A549 (cell line): ENCODE measurements at regions of chr17 and their contacts with region 1.

Region 1: GRCh38 chr17:20206068-20206467 is 196.9 kb downstream of the SPECC1 start:
- DNase-seq: peak; percentile 44 to 74
- ATAC-seq: peak; percentile 83 to 87
- H3K4me3 ChIP-seq: no peak overlapping the region
- H3K27ac ChIP-seq: peak overlapping the region; percentile 88 to 92
- H3K4me1 ChIP-seq: peaks cover 75% of the 10 kb centered on the region
- CTCF ChIP-seq: no peak
- EP300 ChIP-seq: no peak
- POLR2A ChIP-seq: no peak
- RAD21 ChIP-seq: no peak

Region 2: DNA sequence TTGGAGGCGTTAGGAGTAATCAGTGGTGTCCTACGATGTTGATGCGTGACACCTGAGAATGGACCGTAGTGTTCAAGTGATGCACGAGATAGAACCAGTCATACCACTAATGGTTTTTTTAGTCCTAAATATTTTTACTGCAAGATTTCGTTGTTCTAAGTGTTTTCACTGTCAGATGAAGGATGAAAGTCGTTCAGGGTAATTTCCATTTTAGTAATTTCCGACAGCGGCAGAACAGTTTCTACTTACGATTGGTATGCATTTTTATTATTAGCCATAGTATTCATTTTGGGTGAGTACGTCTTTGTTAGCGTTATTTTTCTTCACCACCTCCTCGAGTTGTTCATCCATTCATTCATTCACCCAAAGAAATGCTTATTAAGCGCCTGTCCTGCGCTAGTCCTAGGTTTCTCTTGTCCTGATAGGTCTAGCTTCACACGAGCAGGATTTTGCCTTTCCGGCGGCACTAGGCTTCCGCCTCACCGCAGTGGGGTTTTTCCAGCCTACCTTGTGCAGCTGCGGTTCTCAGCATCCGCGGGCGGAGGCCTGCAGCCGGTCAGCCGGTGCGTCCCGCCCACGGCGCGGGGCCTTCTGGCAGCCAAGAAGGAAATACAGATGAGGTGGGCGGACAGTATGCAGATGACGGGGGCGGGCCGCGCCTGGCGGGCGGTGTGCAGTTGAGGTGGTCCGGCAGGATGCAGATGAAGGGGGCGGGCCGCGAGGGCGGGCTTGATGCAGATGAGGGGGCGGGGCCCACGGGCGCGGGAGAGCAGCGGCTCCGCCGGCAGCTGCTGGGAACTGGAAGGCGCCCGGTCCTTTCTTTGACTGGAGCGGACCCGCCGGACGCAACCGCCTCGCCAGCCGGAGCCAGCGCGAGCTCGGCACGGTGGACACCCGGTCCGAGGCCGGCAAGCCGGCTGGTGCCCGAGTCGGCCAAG is 50.5 kb before region 1 on chr17:
- CTCF ChIA-PET with region 1: interaction called, 4 read pairs
- POLR2A ChIA-PET with region 1: interaction called, 32 read pairs
- DNase-seq: peak; percentile 97
- ATAC-seq: peak; percentile 94 to 98
- H3K4me3 ChIP-seq: peak overlapping the region; percentile 69
- H3K27ac ChIP-seq: peak overlapping the region; percentile 81 to 91
- H3K4me1 ChIP-seq: peaks cover 25% of the 10 kb centered on the region
- CTCF ChIP-seq: no peak
- EP300 ChIP-seq: no peak
- POLR2A ChIP-seq: peak; percentile 45
- RAD21 ChIP-seq: no peak

Region 3: GRCh38 chr17:20184977-20185619 is 21.0 kb before region 1 on chr17:
- CTCF ChIA-PET with region 1: interaction called, 23 read pairs
- POLR2A ChIA-PET with region 1: no interaction called
- DNase-seq: peak in 1 of 2 experiments; percentile 29
- ATAC-seq: peak in 1 of 2 experiments; percentile 36; a peak in 3 of 6 replicates
- H3K4me3 ChIP-seq: no peak overlapping the region
- H3K27ac ChIP-seq: peak overlapping the region in 1 of 2 experiments; percentile 44; a peak in 3 of 6 replicates
- H3K4me1 ChIP-seq: peaks cover 50% of the 10 kb centered on the region
- CTCF ChIP-seq: no peak
- EP300 ChIP-seq: no peak
- POLR2A ChIP-seq: no peak
- RAD21 ChIP-seq: no peak

Region 4: GRCh38 chr17:20216154-20216815 is 10.2 kb after region 1 on chr17:
- CTCF ChIA-PET with region 1: interaction called, 17 read pairs
- POLR2A ChIA-PET with region 1: interaction called, 6 read pairs
- DNase-seq: peak; percentile 48 to 55
- ATAC-seq: peak; percentile 74 to 81
- H3K4me3 ChIP-seq: no peak overlapping the region
- H3K27ac ChIP-seq: peak overlapping the region; percentile 76 to 86
- H3K4me1 ChIP-seq: peaks cover 62% of the 10 kb centered on the region
- CTCF ChIP-seq: no peak
- EP300 ChIP-seq: peak; percentile 32 to 60; a peak in 2 of 5 replicates
- POLR2A ChIP-seq: no peak
- RAD21 ChIP-seq: no peak